Endothelial cell of umbilical vein (primary cell): ENCODE measurements at regions of chr22 and their contacts with region 1.

Region 1: GRCh38 chr22:49724893-49725474 is 102.7 kb downstream of the BRD1 start:
- DNase-seq: peak; percentile 52
- H3K4me3 ChIP-seq: no peak overlapping the region
- H3K27ac ChIP-seq: no peak overlapping the region
- H3K4me1 ChIP-seq: peaks cover 8% of the 10 kb centered on the region
- H3K27me3 ChIP-seq: peaks cover 5 to 6% of the 10 kb centered on the region in 2 experiments
- CTCF ChIP-seq: peak; percentile 77 to 94
- POLR2A ChIP-seq: no peak

Region 2: GRCh38 chr22:48574776-48575565 is 1150.0 kb before region 1 on chr22:
- CTCF ChIA-PET with region 1: interaction called, 5 read pairs
- POLR2A ChIA-PET with region 1: no interaction called
- dilution Hi-C with region 1: no loop called
- intact Hi-C with region 1: loop called (anchors 10 kb)
- DNase-seq: no peak
- H3K4me3 ChIP-seq: no peak overlapping the region
- H3K27ac ChIP-seq: no peak overlapping the region
- H3K4me1 ChIP-seq: no peaks in the 10 kb centered on the region
- H3K27me3 ChIP-seq: peaks cover 12 to 15% of the 10 kb centered on the region in 2 experiments
- CTCF ChIP-seq: peak in 1 of 2 donors; percentile 25
- POLR2A ChIP-seq: no peak

Region 3: GRCh38 chr22:49305214-49305909 is 419.6 kb before region 1 on chr22:
- CTCF ChIA-PET with region 1: no interaction called
- POLR2A ChIA-PET with region 1: no interaction called
- dilution Hi-C with region 1: no loop called
- intact Hi-C with region 1: loop called (anchors 10 kb)
- DNase-seq: peak; percentile 4
- H3K4me3 ChIP-seq: no peak overlapping the region
- H3K27ac ChIP-seq: no peak overlapping the region
- H3K4me1 ChIP-seq: no peaks in the 10 kb centered on the region
- H3K27me3 ChIP-seq: no peaks in the 10 kb centered on the region
- CTCF ChIP-seq: peak; percentile 72 to 77
- POLR2A ChIP-seq: no peak

Region 4: GRCh38 chr22:49586873-49587272 is 138.1 kb before region 1 on chr22:
- CTCF ChIA-PET with region 1: no interaction called
- POLR2A ChIA-PET with region 1: no interaction called
- dilution Hi-C with region 1: no loop called
- intact Hi-C with region 1: loop called (anchors 1 kb)
- DNase-seq: no peak
- H3K4me3 ChIP-seq: no peak overlapping the region
- H3K27ac ChIP-seq: no peak overlapping the region
- H3K4me1 ChIP-seq: no peaks in the 10 kb centered on the region
- H3K27me3 ChIP-seq: no peaks in the 10 kb centered on the region
- CTCF ChIP-seq: peak in 1 of 2 donors; percentile 25
- POLR2A ChIP-seq: no peak

Region 5: GRCh38 chr22:49592780-49593501 is 132.0 kb before region 1 on chr22:
- CTCF ChIA-PET with region 1: interaction called, 3 read pairs
- POLR2A ChIA-PET with region 1: no interaction called
- dilution Hi-C with region 1: no loop called
- intact Hi-C with region 1: loop called (anchors 2 kb)
- DNase-seq: peak; percentile 57
- H3K4me3 ChIP-seq: no peak overlapping the region
- H3K27ac ChIP-seq: no peak overlapping the region
- H3K4me1 ChIP-seq: no peaks in the 10 kb centered on the region
- H3K27me3 ChIP-seq: no peaks in the 10 kb centered on the region
- CTCF ChIP-seq: no peak
- POLR2A ChIP-seq: no peak

Region 6: DNA sequence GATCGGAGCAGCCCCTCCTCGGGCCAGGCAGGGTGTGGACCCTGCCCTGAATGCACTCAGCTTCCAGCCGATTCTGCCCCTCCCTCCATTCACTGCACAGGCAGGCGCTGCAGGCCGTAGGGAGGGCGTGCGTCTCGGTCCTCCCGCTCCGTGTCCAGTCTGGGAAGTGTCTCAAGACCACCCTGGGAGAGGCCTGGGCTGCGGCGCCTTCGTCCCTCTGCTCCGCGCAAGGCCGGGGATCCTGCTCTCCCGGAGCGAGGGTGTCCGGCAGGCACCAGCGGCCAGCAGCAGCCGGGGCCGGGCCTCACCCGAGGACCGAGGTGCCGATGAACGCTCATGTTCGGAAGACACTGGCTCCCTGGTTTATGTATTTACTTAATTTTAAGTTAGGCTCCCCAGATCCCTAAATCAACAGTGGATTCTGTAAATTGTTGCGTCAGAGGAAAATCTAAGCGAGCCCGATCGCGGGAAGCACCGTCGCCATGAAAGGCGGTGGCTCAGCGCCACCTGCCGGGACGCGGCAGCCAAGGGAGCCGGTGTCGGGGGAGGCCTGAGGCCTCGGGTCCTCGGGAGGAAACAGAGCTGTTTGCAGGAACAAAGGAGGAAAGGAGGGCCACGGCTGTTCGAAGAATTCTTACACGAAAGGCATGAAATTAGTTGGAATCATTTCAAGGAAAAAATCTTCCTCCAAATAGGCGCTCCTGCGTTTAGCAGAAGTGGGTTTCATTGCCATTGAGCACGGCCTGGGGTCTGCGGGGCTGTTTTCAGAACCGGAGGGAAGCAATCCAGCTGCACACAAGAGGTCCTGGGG is 92.6 kb before region 1 on chr22:
- CTCF ChIA-PET with region 1: interaction called, 17 read pairs
- POLR2A ChIA-PET with region 1: no interaction called
- dilution Hi-C with region 1: no loop called
- intact Hi-C with region 1: loop called (anchors 2 kb)
- DNase-seq: peak; percentile 76
- H3K4me3 ChIP-seq: peak overlapping the region in 2 of 3 experiments; percentile 3 to 46
- H3K27ac ChIP-seq: no peak overlapping the region
- H3K4me1 ChIP-seq: peaks cover 5% of the 10 kb centered on the region
- H3K27me3 ChIP-seq: no peaks in the 10 kb centered on the region
- CTCF ChIP-seq: peak; percentile 88 to 91
- POLR2A ChIP-seq: no peak